ENCODE measurements at regions of chrX and their contacts with region 1.

Region 1: GRCh38 chrX:43654431-43655150 is 1.5 kb upstream of the MAOA start:
- DNase-seq: peak; percentile 97
- H3K4me3 ChIP-seq: peak overlapping the region; percentile 66 to 81 (median 75)
- H3K27ac ChIP-seq: peak overlapping the region; percentile 89 to 95 (median 92)
- H3K4me1 ChIP-seq: peaks cover 0 to 2% (median 0%) of the 10 kb centered on the region in 4 donors
- H3K27me3 ChIP-seq: no peaks in the 10 kb centered on the region
- CTCF ChIP-seq: peak in 1 of 4 experiments; percentile 30
- EP300 ChIP-seq: no peak
- POLR2A ChIP-seq: peak; percentile 25 to 78

Region 2: GRCh38 chrX:43557792-43558191 is 96.8 kb before region 1 on chrX:
- intact Hi-C with region 1: loop called (anchors 2 kb)
- DNase-seq: peak; percentile 68
- H3K4me3 ChIP-seq: no peak overlapping the region
- H3K27ac ChIP-seq: no peak overlapping the region
- H3K4me1 ChIP-seq: no peaks in the 10 kb centered on the region
- H3K27me3 ChIP-seq: no peaks in the 10 kb centered on the region
- CTCF ChIP-seq: peak in 3 of 4 experiments; percentile 31 to 50 (median 34)
- EP300 ChIP-seq: no peak
- POLR2A ChIP-seq: no peak

Region 3: DNA sequence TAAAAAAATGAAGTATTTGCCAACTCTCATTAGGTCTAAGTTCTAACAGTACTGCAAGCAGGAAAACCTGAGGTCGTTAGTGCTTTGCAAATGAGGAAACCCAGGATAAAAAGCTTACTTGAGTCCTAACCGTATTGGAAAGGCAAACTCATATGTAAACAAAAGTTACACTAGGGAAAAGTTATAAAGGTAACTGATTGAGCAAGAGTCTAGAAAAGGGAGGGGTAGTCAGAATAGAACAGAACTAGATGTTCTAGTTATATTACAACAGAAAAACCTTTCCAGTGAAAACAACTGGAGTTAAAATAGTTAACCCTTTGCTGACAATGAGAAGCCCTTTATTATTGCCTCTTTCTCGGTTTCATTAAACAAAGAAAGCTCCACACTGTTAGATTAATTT is 64.9 kb before region 1 on chrX:
- intact Hi-C with region 1: loop called (anchors 2 kb)
- DNase-seq: no peak
- H3K4me3 ChIP-seq: no peak overlapping the region
- H3K27ac ChIP-seq: peak overlapping the region; percentile 63 to 73 (median 66)
- H3K4me1 ChIP-seq: peaks cover 0 to 23% (median 6%) of the 10 kb centered on the region in 4 donors
- H3K27me3 ChIP-seq: no peaks in the 10 kb centered on the region
- CTCF ChIP-seq: no peak
- EP300 ChIP-seq: peak in 2 of 4 donors; percentile 15 to 79
- POLR2A ChIP-seq: no peak

Region 4: DNA sequence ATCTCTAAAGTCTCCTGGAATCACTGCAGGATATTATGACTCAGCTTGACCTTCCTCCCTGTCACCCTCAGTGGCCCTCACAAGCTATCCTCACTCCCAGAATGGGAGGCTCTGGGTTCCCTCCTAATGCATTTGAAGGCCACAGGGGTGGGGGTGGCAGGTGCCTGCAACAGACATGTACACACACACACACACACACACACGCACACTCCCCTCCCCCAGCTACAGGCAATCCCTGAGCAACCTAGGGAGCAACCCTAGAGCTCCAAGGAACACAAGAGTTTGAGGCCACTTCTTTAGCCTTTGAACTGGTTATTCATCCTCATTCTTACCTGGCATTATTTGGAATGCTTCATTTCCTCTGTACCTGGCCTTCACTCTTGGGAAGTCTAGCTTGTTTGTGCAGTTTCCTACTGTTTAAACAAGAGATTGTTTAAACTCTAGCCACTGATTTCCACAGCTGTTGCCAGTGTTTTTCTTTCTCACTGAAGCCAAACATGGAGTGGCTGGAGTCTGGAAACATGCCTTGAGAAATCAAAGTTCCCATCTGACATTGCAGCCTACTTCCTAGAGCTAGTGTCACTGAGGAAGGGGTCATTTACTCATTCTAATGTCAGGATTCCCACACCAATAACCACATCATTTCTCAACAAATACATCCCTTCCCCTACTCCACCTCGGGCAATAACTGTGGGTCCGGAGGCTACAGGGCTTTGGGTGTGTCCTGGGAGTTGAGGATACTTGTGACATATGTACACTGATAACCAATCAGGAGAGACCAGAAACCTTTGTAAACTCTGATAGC is 39.2 kb after region 1 on chrX:
- intact Hi-C with region 1: loop called (anchors 5 kb)
- DNase-seq: no peak
- H3K4me3 ChIP-seq: no peak overlapping the region
- H3K27ac ChIP-seq: peak overlapping the region in 3 of 4 donors; percentile 35 to 46 (median 37)
- H3K4me1 ChIP-seq: peaks cover 0 to 22% (median 8%) of the 10 kb centered on the region in 4 donors
- H3K27me3 ChIP-seq: no peaks in the 10 kb centered on the region
- CTCF ChIP-seq: no peak
- EP300 ChIP-seq: no peak
- POLR2A ChIP-seq: no peak

Region 5: DNA sequence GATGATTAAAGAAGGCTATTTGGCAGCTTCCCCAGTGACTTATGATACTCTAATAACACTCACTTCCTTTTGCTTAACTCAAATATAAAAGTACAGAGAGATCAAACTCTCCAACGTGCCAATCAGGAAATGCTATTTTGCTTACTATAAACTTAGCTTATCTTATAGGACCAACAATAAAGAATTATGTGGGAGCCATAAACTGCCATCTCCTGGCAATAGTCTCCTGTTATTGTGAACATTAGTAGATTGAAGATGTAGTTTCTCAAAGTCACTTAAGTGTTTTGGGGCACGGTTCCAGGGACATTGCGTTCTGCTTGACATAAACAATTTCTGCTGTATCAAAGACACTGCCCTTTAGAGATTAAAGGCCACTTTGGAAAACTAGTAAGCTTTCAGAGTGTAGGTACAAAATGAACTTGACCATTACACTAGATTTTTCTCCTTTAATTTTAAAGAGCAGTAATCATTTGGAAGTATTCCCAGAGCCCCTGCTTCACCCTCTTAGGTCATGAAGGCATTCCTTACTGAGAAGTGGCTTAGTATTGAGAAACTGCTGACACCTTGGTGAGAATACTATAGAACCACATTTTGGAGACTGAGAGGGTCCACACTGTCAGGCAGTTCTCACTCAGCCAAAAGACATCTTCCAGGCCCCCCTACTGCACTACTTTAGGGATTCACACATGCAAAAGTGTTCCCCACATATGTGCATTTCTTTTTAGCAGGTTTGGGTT is 53.4 kb after region 1 on chrX:
- intact Hi-C with region 1: loop called (anchors 5 kb)
- DNase-seq: peak; percentile 91
- H3K4me3 ChIP-seq: no peak overlapping the region
- H3K27ac ChIP-seq: peak overlapping the region; percentile 76 to 80 (median 78)
- H3K4me1 ChIP-seq: peaks cover 0 to 71% (median 28%) of the 10 kb centered on the region in 4 donors
- H3K27me3 ChIP-seq: no peaks in the 10 kb centered on the region
- CTCF ChIP-seq: no peak
- EP300 ChIP-seq: peak in 2 of 4 donors; percentile 91 to 95
- POLR2A ChIP-seq: no peak

Region 6: DNA sequence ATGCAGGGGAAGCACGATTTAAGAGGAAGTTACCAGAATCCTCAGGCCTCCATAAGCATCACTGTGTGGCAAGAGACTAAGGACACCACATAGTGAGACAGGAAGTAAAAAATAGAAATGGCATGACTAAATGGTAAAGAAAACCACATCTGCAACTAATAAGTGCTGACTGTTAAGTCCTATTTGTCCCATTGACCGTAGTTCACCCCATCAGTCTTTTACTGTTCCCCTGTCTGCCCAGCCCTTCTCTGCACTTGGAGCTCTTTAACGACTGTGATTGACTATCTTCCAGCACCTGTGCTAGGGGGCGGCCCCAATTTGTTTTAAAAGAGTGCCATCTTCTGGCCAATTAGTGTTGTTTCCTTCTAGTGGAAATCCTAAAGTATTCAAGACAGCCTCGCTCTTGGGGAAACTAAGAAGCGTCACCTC is 95.7 kb after region 1 on chrX:
- intact Hi-C with region 1: loop called (anchors 1 kb)
- DNase-seq: peak; percentile 76
- H3K4me3 ChIP-seq: no peak overlapping the region
- H3K27ac ChIP-seq: no peak overlapping the region
- H3K4me1 ChIP-seq: peaks cover 0 to 11% (median 0%) of the 10 kb centered on the region in 4 donors
- H3K27me3 ChIP-seq: no peaks in the 10 kb centered on the region
- CTCF ChIP-seq: peak; percentile 32 to 51 (median 46)
- EP300 ChIP-seq: no peak
- POLR2A ChIP-seq: no peak

Region 7: GRCh38 chrX:44651358-44651757 is 996.8 kb after region 1 on chrX:
- intact Hi-C with region 1: no loop called
- DNase-seq: no peak
- H3K4me3 ChIP-seq: no peak overlapping the region
- H3K27ac ChIP-seq: no peak overlapping the region
- H3K4me1 ChIP-seq: no peaks in the 10 kb centered on the region
- H3K27me3 ChIP-seq: no peaks in the 10 kb centered on the region
- CTCF ChIP-seq: no peak
- EP300 ChIP-seq: no peak
- POLR2A ChIP-seq: no peak

Measured in sigmoid colon (tissue), 7 donors.